ENCODE measurements at regions of chr10 and their contacts with region 1.

Region 1: GRCh38 chr10:117768333-117769042 is 225.9 kb downstream of the EMX2 start:
- DNase-seq: no peak
- ATAC-seq: no peak
- H3K4me3 ChIP-seq: no peak overlapping the region
- H3K4me3 Mint-ChIP-seq: no peak overlapping the region
- H3K27ac ChIP-seq: no peak overlapping the region
- H3K27ac Mint-ChIP-seq: no peak overlapping the region
- H3K4me1 ChIP-seq: no peaks in the 10 kb centered on the region
- H3K4me1 Mint-ChIP-seq: no peaks in the 10 kb centered on the region
- H3K27me3 ChIP-seq: peaks cover 0 to 7% of the 10 kb centered on the region in 2 experiments
- H3K27me3 Mint-ChIP-seq: peaks cover 3 to 12% of the 10 kb centered on the region in 2 donors

Region 2: DNA sequence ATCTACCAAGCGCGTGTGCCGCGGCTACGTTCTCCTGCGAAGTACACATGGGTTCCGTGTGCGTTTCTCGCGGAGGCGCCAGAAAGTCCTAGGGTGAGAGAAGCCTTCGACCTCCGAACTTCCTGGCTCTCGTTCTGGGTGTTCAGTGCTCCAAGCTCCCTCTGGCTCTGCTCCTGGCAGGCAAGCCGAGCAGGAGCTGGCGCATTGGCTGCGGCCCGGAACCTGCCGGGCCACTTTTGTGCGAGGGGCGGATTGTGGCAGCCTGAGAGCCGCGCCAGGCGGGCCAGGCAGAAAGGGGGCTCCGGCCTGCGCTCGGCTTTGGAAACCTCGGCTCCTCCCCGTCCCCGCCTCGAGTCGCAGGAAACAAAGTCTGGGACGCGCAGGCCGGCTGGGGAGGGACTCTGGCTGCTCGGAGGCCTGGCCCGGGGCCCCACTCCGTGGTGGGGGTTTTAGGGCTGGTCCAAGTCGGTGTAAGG is 216.3 kb before region 1 on chr10:
- CTCF ChIA-PET with region 1: no interaction called
- POLR2A ChIA-PET with region 1: no interaction called
- DNase-seq: no peak
- ATAC-seq: no peak
- H3K4me3 ChIP-seq: no peak overlapping the region
- H3K4me3 Mint-ChIP-seq: no peak overlapping the region
- H3K27ac ChIP-seq: no peak overlapping the region
- H3K27ac Mint-ChIP-seq: peak overlapping the region in 1 of 2 donors; percentile 31
- H3K4me1 ChIP-seq: peaks cover 0 to 13% of the 10 kb centered on the region in 2 experiments
- H3K4me1 Mint-ChIP-seq: peaks cover 20 to 29% (median 24%) of the 10 kb centered on the region in 3 donors
- H3K27me3 ChIP-seq: peaks cover 9 to 77% of the 10 kb centered on the region in 2 experiments
- H3K27me3 Mint-ChIP-seq: peaks cover 76 to 86% of the 10 kb centered on the region in 2 donors

Region 3: GRCh38 chr10:117782276-117782675 is 13.8 kb after region 1 on chr10:
- CTCF ChIA-PET with region 1: no interaction called
- POLR2A ChIA-PET with region 1: interaction called in 1 of 2 experiments, 10 read pairs
- DNase-seq: no peak
- ATAC-seq: no peak
- H3K4me3 ChIP-seq: no peak overlapping the region
- H3K4me3 Mint-ChIP-seq: no peak overlapping the region
- H3K27ac ChIP-seq: no peak overlapping the region
- H3K27ac Mint-ChIP-seq: no peak overlapping the region
- H3K4me1 ChIP-seq: no peaks in the 10 kb centered on the region
- H3K4me1 Mint-ChIP-seq: peaks cover 0 to 6% (median 0%) of the 10 kb centered on the region in 3 donors
- H3K27me3 ChIP-seq: no peaks in the 10 kb centered on the region
- H3K27me3 Mint-ChIP-seq: peaks cover 4 to 14% of the 10 kb centered on the region in 2 donors

Measured in T-cell (primary cell).